HEK293T (cell line): ENCODE measurements at regions of chr21 and their contacts with region 1.

Region 1: DNA sequence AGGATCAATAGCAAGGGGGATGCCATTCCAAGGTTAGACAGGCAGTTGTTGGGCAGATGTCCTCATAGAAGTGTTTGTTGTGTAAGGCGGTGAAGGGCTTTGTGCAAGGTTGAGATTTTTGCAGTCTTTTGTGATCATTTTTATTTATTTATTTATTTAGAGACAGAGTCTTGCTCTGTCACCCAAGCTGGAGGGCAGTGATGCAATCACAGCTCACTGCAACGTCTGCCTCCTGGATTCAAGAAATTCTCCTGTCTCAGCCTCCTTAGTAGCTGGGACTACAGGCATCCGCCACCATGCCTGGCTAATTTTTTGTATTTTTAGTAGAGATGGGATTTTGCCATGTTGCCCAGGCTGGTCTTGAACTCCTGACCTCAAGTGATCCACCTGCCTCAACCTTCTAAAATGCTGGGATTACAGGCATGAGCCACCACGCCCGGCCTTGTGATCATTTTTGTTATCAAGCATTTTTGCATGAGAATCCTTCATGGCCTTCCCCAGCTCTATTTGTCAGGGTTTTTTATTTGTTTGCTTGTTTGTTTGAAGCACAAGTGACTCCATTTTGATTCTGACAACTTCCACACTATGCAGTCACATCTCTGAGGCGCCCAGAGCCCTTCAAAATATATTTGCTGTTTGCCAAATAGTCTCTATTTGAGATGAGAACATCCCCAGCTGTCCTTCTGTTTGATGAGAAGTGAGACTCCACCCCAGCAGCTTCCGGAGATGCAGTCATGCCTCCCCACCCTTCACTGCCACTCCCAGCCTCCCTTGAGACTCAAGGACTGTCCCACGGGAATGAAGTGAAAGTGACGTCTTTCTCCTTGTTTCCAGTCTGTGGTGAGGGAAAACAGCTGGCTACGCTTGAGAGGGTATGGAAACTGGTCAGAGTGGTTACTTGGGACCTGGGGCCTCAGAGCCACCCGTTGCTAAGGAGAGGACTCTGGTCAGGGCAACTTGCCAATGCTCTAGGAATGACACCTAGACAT is 38.0 kb downstream of the TMEM50B start:
- DNase-seq: no peak

Region 2: GRCh38 chr21:33199516-33200217 is 242.1 kb before region 1 on chr21:
- CTCF ChIA-PET with region 1: interaction called, 14 read pairs
- POLR2A ChIA-PET with region 1: no interaction called
- DNase-seq: peak; percentile 81

Region 3: GRCh38 chr21:33360881-33361602 is 80.7 kb before region 1 on chr21:
- CTCF ChIA-PET with region 1: interaction called, 11 read pairs
- POLR2A ChIA-PET with region 1: no interaction called
- DNase-seq: peak; percentile 92

Region 4: DNA sequence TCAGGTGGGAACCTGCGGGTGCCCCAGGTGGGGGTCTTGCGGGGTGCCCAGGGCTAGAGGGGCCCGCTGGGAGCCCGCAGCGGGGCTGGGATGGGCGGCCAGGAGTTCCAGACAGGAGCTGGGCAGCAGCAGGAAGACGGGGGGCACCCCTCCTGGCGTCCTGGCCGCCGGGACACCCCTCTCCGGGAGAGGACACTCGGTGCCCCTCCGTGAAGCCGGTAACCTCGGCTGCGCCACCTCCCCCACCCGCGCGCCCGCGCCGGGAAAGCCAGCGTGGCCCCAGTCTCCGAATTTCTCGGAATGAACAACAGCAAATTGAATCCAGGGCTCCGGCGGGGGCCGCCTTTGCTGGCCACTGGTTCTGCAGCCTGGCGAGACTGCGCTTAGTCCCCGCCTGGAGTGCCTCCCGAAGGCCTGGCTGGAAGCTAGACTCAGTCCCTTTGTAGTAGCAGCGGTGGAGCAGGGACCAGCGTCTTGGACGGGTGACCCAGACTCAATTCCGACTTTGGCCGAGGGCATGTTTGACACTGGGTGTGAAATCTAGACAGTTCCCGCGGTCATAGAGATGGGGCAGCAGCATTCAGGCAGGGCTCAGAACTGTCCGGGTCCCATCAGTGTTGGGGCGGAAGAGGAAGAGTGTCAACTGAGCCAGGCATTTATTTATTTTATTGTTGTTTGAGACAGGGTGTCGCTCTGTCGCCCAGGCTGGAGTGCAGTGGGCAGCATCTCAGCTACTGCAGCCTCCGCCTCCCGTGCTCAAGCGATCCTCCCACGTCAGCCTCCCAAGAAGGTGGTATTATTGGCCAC is 37.8 kb before region 1 on chr21:
- CTCF ChIA-PET with region 1: no interaction called
- POLR2A ChIA-PET with region 1: no interaction called
- DNase-seq: peak; percentile 69

Region 5: GRCh38 chr21:33455686-33456446 is 14.1 kb after region 1 on chr21:
- CTCF ChIA-PET with region 1: no interaction called
- POLR2A ChIA-PET with region 1: no interaction called
- DNase-seq: no peak

Region 6: GRCh38 chr21:33721081-33721480 is 279.3 kb after region 1 on chr21:
- CTCF ChIA-PET with region 1: interaction called, 10 read pairs
- POLR2A ChIA-PET with region 1: no interaction called
- DNase-seq: no peak